ENCODE measurements at regions of chr12 and their contacts with region 1.

Region 1: GRCh38 chr12:110280779-110281548 is at the start of gene ATP2A2:
- DNase-seq: no peak
- H3K4me3 ChIP-seq: peak within 1 kb of the TSS; percentile 80 to 98
- H3K27ac ChIP-seq: peak within 1 kb of the TSS; percentile 97
- H3K4me1 ChIP-seq: peaks cover 44% of the 10 kb centered on the region
- H3K27me3 ChIP-seq: no peaks in the 10 kb centered on the region
- CTCF ChIP-seq: no peak
- POLR2A ChIP-seq: peak in 1 of 2 donors; percentile 78
- total RNA-seq, gene ATP2A2: 127 TPM

Region 2: DNA sequence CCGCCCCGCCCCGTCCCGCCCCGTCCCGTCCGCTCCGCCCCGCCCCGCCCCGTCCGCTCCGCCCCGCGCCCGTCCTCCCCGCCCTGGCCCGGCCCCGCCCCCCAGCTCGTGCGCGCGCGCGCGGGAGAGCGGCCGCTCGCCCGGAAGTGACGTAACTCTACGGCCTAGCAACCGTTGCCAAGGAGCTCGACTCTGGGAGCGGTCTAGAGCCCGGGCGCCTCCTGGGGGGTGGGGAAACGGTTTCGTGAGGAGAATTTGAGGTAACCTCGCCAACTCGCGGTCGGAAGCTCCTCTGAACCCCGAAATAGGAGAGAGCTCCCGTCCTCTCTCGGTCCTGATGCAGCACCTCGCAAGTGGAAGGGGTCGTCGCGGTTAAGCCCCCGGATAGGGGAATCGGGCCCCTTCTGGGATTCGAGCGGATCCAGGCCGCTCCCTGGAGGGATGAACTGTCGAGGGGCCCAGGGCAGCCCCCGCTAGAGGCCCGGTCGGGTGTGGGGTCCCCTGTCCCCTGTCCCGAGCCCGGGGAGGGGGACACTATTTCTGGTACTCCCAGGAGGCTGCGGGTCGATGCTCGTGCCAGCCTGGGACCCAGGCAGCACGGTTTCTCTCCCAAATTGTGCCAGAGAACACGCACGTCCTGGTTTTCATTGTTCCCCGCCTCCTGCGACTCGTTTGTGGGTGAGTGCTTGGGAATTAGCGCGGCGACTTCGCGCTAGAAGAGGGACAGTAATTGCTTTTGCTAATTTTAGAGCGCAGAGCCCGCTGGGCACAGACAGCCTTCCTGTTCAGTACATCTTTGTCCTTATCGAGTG is 156.6 kb before region 1 on chr12 and contains the start of gene IFT81:
- intact Hi-C with region 1: loop called (anchors 5 kb)
- DNase-seq: peak in 1 of 2 donors; percentile 94
- H3K4me3 ChIP-seq: peak within 1 kb of the TSS; percentile 70 to 92
- H3K27ac ChIP-seq: peak within 1 kb of the TSS; percentile 85
- H3K4me1 ChIP-seq: peaks cover 41% of the 10 kb centered on the region
- H3K27me3 ChIP-seq: no peaks in the 10 kb centered on the region
- CTCF ChIP-seq: no peak
- POLR2A ChIP-seq: peak in 1 of 2 donors; percentile 71
- total RNA-seq, gene IFT81: 18.2 TPM

Region 3: GRCh38 chr12:110224379-110225304 is 56.3 kb before region 1 on chr12:
- intact Hi-C with region 1: loop called (anchors 2 kb)
- DNase-seq: no peak
- H3K4me3 ChIP-seq: peak overlapping the region; percentile 28 to 32
- H3K27ac ChIP-seq: peak overlapping the region; percentile 77
- H3K4me1 ChIP-seq: peaks cover 29% of the 10 kb centered on the region
- H3K27me3 ChIP-seq: no peaks in the 10 kb centered on the region
- CTCF ChIP-seq: peak in 1 of 3 experiments; percentile 53
- POLR2A ChIP-seq: no peak